Left ventricle myocardium inferior (tissue), 1 donor: ENCODE measurements at regions of chr1 and their contacts with region 1.

Region 1: GRCh38 chr1:33228935-33229487 is 27.3 kb upstream of the ZNF362 start:
- DNase-seq: no peak
- H3K4me3 ChIP-seq: no peak overlapping the region
- H3K27ac ChIP-seq: peak overlapping the region; percentile 56
- H3K4me1 ChIP-seq: peaks cover 22% of the 10 kb centered on the region
- H3K27me3 ChIP-seq: no peaks in the 10 kb centered on the region
- CTCF ChIP-seq: no peak

Region 2: DNA sequence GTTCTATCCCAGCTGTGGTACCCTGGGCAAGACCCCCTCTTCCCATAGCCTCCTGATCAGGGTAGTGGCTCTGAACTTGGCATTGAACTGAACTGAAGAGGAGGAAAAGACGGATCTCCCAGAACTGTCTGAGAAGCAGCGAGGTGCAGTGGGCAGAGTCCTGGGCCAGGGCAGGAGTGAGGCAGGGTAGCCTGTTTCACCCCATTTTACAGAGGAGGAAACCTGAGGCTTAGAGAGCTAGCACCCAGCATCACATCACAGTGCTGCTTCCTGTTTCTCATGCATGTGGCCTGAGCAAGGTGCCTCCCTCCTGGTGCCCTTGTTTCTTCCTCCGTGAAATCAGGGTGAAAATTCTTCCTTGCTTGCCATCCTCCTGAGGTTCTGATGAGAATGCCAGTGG is 44.4 kb after region 1 on chr1:
- intact Hi-C with region 1: loop called (anchors 10 kb)
- DNase-seq: no peak
- H3K4me3 ChIP-seq: no peak overlapping the region
- H3K27ac ChIP-seq: no peak overlapping the region
- H3K4me1 ChIP-seq: peaks cover 64% of the 10 kb centered on the region
- H3K27me3 ChIP-seq: no peaks in the 10 kb centered on the region
- CTCF ChIP-seq: no peak